ENCODE measurements at regions of chr5 and their contacts with region 1.

Region 1: GRCh38 chr5:65925601-65926275 is 637 bp upstream of the ERBIN start:
- DNase-seq: peak; percentile 43
- H3K4me3 ChIP-seq: peak overlapping the region; percentile 66
- H3K27me3 ChIP-seq: no peaks in the 10 kb centered on the region
- CTCF ChIP-seq: peak; percentile 32

Region 2: DNA sequence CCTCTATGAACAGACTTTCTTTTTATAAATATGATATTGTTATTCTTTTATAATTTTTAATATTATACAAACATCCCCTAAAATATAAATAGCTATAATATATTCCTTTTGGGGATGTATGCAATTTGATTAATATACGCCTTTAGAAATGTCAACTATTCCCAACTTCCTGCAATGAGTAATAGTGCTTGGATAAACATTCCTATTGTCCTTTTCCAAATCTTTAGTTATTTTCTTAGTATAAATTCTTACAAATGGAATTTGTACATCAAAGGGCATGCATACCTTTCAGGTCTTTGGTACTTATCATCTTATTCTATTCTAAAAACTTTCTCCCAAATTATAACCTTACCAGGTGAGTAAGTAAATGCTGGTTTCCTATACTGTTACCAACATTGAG is 197.5 kb before region 1 on chr5:
- CTCF ChIA-PET with region 1: no interaction called
- POLR2A ChIA-PET with region 1: no interaction called
- DNase-seq: no peak
- H3K4me3 ChIP-seq: no peak overlapping the region
- H3K27me3 ChIP-seq: no peaks in the 10 kb centered on the region
- CTCF ChIP-seq: no peak

Region 3: GRCh38 chr5:65808251-65808741 is 117.4 kb before region 1 on chr5:
- CTCF ChIA-PET with region 1: no interaction called
- POLR2A ChIA-PET with region 1: interaction called, 10 read pairs
- DNase-seq: no peak
- H3K4me3 ChIP-seq: 0 out of 2 replicates have a peak overlapping the region, but pooled peaks have one; percentile 1
- H3K27me3 ChIP-seq: no peaks in the 10 kb centered on the region
- CTCF ChIP-seq: 0 out of 2 replicates have a peak, but pooled peaks have one; percentile 12

Region 4: DNA sequence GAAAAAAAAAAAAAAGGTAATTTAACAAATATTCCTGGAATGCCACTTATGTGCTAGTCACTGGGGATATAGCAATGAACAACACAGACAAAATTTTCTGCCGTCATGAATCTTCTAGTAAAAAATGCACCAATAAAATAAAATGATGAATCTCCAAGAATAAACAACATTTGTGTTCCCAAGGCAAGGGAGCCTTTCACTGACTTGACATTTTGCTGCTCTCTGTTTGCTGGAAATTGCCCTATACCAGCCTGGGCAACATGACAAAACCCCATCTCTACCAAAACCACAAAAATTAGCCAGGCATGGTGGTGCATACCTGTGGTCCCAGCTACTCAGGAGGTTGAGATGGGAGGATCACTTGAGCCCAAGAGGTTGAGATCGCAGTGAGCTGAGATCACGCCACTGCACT is 63.9 kb before region 1 on chr5:
- CTCF ChIA-PET with region 1: interaction called, 4 read pairs
- POLR2A ChIA-PET with region 1: interaction called, 19 read pairs
- DNase-seq: peak; percentile 99
- H3K4me3 ChIP-seq: no peak overlapping the region
- H3K27me3 ChIP-seq: no peaks in the 10 kb centered on the region
- CTCF ChIP-seq: no peak

Region 5: DNA sequence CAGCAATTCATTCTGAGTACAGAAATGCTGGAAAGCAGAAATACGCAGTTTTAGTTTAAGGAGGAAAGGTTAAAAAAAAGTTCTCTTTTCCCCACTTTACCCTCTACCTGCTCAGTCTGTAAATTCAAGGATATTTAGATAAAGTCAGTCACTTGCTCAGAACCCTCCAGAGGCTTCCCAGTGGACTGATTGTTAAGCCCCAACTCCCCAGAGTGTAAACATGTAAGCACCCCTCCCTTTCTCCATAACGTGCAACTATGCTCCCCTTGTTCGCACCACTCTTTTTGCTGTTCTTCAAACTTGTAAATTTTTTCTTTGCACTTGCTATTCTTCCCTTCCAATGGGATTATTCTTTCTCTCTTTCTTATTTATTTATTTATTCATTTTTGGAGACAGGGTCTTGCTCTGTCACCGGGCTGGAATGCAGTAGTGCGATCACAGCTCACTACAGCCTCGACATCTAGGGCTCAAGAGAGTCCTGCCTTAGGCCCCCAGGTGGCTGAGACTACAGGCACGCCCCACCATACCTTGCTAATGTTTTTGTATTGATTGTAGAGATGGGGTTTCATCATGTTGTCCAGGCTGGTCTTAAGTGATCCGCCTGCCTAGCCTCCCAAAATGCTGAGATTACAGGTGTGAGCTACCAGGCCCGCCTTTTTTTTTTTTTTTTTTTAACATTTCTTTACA is 31.8 kb before region 1 on chr5:
- CTCF ChIA-PET with region 1: no interaction called
- POLR2A ChIA-PET with region 1: interaction called, 11 read pairs
- DNase-seq: no peak
- H3K4me3 ChIP-seq: no peak overlapping the region
- H3K27me3 ChIP-seq: no peaks in the 10 kb centered on the region
- CTCF ChIP-seq: no peak